GM12878 (cell line): ENCODE measurements at regions of chr13 and their contacts with region 1.

Region 1: DNA sequence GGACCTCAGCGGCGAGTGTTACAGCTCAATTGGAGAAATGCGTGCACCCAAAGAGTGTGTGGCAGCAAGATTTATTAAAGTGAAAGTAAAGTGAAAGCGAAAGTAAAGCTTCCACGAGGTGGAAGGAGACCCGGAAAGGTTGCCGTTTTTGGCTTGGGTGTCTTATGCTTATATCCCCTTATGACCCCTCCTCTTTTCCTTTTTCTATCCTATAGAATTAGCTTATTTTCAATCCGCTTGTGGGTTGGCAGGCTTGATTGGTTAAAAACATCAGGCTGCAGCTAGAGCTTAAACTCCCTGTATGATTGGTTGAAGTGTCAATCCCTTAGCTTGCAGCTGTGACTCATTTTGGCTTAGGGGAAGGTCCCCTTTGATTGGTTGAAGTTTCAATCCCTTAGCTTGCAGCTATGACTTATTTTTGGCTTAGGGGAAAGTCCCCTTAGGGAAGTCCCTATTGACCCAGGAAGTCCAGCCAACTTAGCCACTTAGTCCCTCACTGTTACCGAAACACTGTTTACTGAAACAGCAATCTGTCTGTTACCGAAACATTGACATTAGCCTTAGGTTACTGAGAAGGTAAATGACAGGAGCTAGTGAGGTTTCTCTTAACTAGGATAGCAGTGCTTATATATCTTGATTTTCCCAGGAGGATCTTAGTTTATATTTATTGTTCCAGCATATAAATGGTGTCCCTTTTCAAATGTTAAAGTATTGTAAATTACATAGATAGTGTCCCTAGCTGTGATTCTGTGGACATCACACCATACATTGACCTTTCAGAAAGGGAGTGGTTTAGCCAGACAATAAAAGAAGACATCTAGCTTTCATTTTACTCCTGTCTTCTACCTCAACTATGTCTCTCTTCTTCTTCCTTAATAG is 575.8 kb downstream of the DACH1 start:
- DNase-seq: peak; percentile 71
- ATAC-seq: peak; percentile 92
- H3K4me3 ChIP-seq: no peak overlapping the region
- H3K27ac ChIP-seq: peak overlapping the region; percentile 50; the same call in 1 of the 2 replicates
- H3K4me1 ChIP-seq: no peaks in the 10 kb centered on the region
- H3K27me3 ChIP-seq: no peaks in the 10 kb centered on the region
- CTCF ChIP-seq: no peak
- EP300 ChIP-seq: no peak
- POLR2A ChIP-seq: no peak
- RAD21 ChIP-seq: no peak

Region 2: DNA sequence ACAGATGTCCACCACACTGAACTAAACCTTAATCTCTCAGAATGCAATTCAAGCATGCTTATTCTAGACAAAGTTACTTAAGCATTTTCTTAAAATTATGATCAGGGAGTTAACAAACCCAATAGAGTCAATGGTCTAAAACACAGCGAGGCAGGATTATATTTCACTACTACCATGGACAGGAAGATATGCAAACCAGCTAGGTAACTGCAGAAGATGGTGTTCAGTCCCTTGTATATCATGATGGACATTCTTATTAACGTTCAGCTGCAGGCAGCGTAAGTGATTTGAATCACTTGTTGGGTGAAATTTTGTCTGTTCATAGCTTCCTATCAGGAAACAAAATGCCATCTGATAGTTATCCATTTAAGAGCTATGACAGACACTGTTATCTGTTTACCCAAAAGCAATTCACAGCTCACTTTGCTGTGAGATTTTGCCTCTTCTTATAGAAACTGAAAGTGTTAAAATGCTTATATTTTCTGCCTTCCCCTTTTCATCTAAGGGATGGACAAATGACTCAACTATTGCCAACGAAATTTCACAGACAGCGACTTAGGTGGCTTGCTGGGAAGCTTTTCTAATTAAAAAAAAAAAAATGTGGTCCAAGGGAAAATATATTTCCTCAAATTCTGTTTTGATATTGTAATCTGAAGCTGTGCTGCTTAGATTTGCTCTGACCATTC is 16.1 kb before region 1 on chr13:
- CTCF ChIA-PET with region 1: interaction called, 13 read pairs
- POLR2A ChIA-PET with region 1: interaction called, 3 read pairs
- RAD21 ChIA-PET with region 1: interaction called, 7 read pairs
- SMC1A ChIA-PET with region 1: interaction called, 68 read pairs
- in situ Hi-C with region 1: no loop called
- intact Hi-C with region 1: no loop called
- DNase-seq: peak; percentile 32
- ATAC-seq: peak; percentile 88
- H3K4me3 ChIP-seq: no peak overlapping the region
- H3K27ac ChIP-seq: no peak overlapping the region
- H3K4me1 ChIP-seq: no peaks in the 10 kb centered on the region
- H3K27me3 ChIP-seq: no peaks in the 10 kb centered on the region
- CTCF ChIP-seq: no peak
- EP300 ChIP-seq: no peak
- POLR2A ChIP-seq: no peak
- RAD21 ChIP-seq: no peak

Region 3: GRCh38 chr13:71879129-71879535 is 587.9 kb after region 1 on chr13:
- CTCF ChIA-PET with region 1: interaction called, 8 read pairs
- POLR2A ChIA-PET with region 1: interaction called, 3 read pairs
- RAD21 ChIA-PET with region 1: interaction called, 3 read pairs
- SMC1A ChIA-PET with region 1: interaction called, 4 read pairs
- in situ Hi-C with region 1: loop called (anchors 10 kb)
- intact Hi-C with region 1: no loop called
- DNase-seq: no peak
- ATAC-seq: peak; percentile 86
- H3K4me3 ChIP-seq: no peak overlapping the region
- H3K27ac ChIP-seq: no peak overlapping the region
- H3K4me1 ChIP-seq: peaks cover 7% of the 10 kb centered on the region; the same call in 1 of the 2 replicates
- H3K27me3 ChIP-seq: no peaks in the 10 kb centered on the region
- CTCF ChIP-seq: peak; percentile 47 to 68 (median 64)
- EP300 ChIP-seq: no peak
- POLR2A ChIP-seq: no peak
- RAD21 ChIP-seq: peak; percentile 77

Region 4: DNA sequence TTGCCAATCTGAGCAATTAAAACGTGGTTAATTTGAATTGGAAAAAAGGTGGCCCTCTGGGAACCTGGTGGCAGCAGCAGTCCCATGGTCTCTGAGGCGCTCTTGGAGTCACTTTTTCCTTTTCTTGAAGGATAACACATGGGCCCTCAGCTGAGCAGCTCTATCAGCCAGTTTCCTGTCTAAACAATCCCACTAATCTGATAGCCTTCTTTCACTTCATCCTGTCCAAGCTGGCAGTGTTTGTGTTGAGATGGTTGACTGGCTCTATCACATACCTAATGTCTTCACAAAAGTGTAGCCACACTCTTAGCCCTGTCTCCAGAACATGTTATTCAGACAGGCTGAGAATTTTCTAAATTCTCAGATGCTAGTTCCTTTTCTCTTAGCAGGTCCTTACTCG is 1425.6 kb after region 1 on chr13:
- CTCF ChIA-PET with region 1: no interaction called
- POLR2A ChIA-PET with region 1: no interaction called
- RAD21 ChIA-PET with region 1: interaction called, 3 read pairs
- SMC1A ChIA-PET with region 1: no interaction called
- in situ Hi-C with region 1: loop called (anchors 25 kb)
- intact Hi-C with region 1: no loop called
- DNase-seq: no peak
- ATAC-seq: no peak
- H3K4me3 ChIP-seq: no peak overlapping the region
- H3K27ac ChIP-seq: no peak overlapping the region
- H3K4me1 ChIP-seq: no peaks in the 10 kb centered on the region
- H3K27me3 ChIP-seq: no peaks in the 10 kb centered on the region
- CTCF ChIP-seq: no peak
- EP300 ChIP-seq: no peak
- POLR2A ChIP-seq: no peak
- RAD21 ChIP-seq: no peak